HCT116 (cell line): ENCODE measurements at regions of chr1 and their contacts with region 1.

Region 1: GRCh38 chr1:181113061-181113725 is 24.7 kb downstream of the IER5 start:
- DNase-seq: peak; percentile 63
- ATAC-seq: peak; percentile 78
- H3K4me3 ChIP-seq: peak overlapping the region in 1 of 2 experiments; percentile 36; a peak in 3 of 4 replicates
- H3K27ac ChIP-seq: peak overlapping the region; percentile 70
- H3K4me1 ChIP-seq: peaks cover 56 to 90% of the 10 kb centered on the region in 2 experiments
- H3K27me3 ChIP-seq: no peaks in the 10 kb centered on the region
- CTCF ChIP-seq: no peak
- POLR2A ChIP-seq: no peak
- RAD21 ChIP-seq: no peak; the same call in 1 of the 2 replicates

Region 2: DNA sequence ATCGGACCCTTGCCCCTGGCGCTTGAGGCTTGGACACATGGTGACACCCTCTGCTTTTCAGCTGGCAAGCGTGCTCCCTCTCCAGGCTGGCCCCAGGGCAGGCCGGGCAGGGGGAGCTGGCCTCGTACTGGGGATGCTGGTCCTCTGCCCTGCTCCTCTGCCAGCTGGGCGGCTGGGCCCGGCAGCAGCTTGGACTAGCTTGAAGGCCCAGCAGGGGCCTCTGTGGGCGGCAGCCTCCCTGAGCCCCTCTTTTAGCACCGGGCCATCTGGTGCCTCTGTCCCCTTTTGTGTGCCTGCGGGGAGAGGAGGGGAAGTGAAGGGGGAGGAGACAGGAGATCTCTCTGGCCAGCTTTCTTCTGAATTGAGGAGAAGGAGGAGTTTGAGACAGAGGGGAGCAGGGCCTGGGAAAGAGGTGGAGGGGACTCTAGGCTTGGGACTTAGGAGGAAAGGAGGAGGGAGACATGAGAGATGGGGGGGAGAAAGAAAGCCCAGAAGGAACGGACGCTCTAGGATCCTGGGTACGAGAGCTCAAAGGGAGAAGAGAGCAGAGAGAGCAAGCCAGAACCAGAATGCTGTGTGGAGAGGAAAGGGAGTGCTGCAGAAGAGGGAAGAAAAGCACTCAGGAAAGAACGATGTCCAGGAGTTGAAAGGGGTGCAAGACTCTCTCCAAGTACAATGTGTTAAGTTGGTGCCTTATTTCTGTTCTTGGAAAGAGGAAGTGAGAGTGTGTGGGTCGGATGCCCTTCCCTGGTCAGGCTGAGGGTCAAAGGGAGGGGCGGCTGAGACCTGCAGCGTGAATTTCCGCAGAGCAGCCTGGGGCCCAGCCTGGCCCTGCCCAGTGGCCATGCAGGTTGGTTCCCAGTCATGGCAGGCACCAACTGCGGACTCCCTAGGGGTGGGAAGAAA is 15.7 kb after region 1 on chr1:
- CTCF ChIA-PET with region 1: interaction called, 3 read pairs
- POLR2A ChIA-PET with region 1: interaction called, 11 read pairs
- RAD21 ChIA-PET with region 1: interaction called, 3 to 4 read pairs
- intact Hi-C with region 1: no loop called
- DNase-seq: no peak
- ATAC-seq: no peak
- H3K4me3 ChIP-seq: no peak overlapping the region
- H3K27ac ChIP-seq: no peak overlapping the region; the same call in 1 of the 2 replicates
- H3K4me1 ChIP-seq: peaks cover 14 to 57% of the 10 kb centered on the region in 2 experiments; a peak in 3 of 4 replicates
- H3K27me3 ChIP-seq: no peaks in the 10 kb centered on the region
- CTCF ChIP-seq: no peak
- POLR2A ChIP-seq: no peak
- RAD21 ChIP-seq: no peak